Right ventricle myocardium inferior (tissue), 1 donor: ENCODE measurements at regions of chr19 and their contacts with region 1.

Region 1: GRCh38 chr19:36665832-36666231 is 805 bp downstream of the ZNF461 start:
- DNase-seq: no peak
- ATAC-seq: no peak

Region 2: GRCh38 chr19:36573020-36573885 is 92.6 kb before region 1 on chr19 and contains the start of gene ZNF529:
- intact Hi-C with region 1: loop called (anchors 10 kb)
- DNase-seq: peak; percentile 93
- ATAC-seq: peak; percentile 98
- total RNA-seq, gene ZNF529: 15.3 TPM

Region 3: DNA sequence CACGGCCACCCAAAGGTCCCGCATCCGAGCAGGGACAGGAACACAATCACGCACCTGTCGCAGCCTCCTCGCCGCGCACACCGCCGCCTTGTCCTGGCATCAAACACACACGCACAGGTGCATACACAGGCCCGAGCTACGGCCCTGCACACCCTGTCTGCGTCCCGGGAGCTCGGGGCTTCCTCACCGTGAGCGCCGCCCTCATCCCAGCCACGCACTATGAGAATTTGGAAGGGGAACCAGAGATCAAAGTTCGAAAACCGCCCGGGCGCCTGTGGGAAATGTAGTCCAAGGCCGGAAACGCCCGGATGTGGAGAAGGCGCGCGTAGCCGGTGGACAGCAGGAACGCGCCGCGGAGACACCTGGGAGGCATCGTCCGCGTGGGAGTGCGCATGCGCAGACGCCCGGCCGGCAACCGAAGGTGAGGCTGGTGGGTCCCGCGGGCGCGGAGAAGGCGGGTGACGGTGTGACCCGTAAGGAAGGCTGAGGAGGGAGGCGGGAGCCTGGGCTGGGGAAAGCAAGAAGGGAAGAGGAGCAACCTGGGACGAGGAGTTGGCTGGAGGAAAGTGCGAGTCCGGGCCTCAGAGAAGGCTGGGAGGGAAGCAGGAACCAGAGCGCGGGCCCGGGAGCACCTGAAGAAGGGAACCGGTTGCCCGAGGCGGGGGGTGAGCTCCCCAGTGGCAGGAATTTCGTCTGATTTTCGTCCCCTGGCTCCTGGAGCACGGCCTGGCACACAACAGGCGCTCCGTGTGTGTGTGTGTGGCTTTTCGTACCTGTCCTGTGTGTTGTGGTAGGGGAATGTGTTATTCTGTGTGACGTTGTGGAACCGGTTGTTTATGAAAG is 21.6 kb after region 1 on chr19 and contains the start of gene ZNF567:
- intact Hi-C with region 1: loop called (anchors 1 kb)
- DNase-seq: peak; percentile 98
- ATAC-seq: peak; percentile 99
- total RNA-seq, gene ZNF567: 3.2 TPM